Transverse colon (tissue), 4 donors: ENCODE measurements at regions of chr14 and their contacts with region 1.

Region 1: DNA sequence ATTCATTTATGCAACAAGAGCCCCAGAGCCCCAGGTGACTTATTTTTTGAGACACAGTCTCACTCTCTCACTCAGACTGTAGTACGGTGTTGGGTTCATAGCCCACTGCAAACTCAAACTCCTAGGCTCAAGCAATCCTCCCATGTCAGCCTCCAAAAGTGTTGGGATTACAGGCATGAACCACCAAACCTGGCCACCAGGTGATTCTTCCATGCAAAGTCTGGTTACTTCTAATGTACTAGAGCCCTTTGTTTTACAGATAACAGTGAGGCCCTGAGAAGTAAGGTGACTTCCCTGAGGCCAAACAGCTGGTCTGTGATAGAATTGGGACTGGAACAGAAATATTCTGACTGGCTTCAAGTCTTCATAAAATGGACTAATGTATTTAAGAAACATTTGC is 10.0 kb upstream of the KCNK10 start:
- DNase-seq: no peak
- H3K4me3 ChIP-seq: no peak overlapping the region
- H3K27ac ChIP-seq: no peak overlapping the region
- H3K4me1 ChIP-seq: no peaks in the 10 kb centered on the region
- H3K27me3 ChIP-seq: peaks cover 35% of the 10 kb centered on the region
- CTCF ChIP-seq: no peak
- EP300 ChIP-seq: no peak
- POLR2A ChIP-seq: no peak

Region 2: DNA sequence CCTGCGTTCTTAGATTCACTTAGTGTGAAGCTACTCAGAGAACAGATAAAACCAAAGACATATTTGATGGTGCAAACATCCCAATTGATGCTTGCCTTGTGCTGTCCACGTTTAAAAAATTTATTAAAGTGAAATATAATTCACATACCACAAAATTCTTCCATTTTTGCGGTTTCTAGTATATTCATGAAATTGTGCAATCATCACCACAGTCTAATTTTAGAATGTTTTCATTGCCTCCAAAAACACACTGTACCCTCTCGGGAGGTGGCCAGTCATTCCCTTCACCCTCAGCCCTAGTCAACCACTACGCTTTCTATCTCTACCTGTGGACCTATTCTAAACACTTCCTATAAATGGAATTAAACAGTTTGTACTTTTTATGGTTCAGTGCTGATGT is 1693.9 kb before region 1 on chr14:
- in situ Hi-C with region 1: no loop called
- intact Hi-C with region 1: no loop called
- DNase-seq: no peak
- H3K4me3 ChIP-seq: no peak overlapping the region
- H3K27ac ChIP-seq: no peak overlapping the region
- H3K4me1 ChIP-seq: no peaks in the 10 kb centered on the region
- H3K27me3 ChIP-seq: no peaks in the 10 kb centered on the region
- CTCF ChIP-seq: no peak
- EP300 ChIP-seq: no peak
- POLR2A ChIP-seq: no peak

Region 3: GRCh38 chr14:88369496-88369895 is 36.5 kb after region 1 on chr14:
- in situ Hi-C with region 1: no loop called
- intact Hi-C with region 1: loop called (anchors 1 kb)
- DNase-seq: no peak
- H3K4me3 ChIP-seq: no peak overlapping the region
- H3K27ac ChIP-seq: no peak overlapping the region
- H3K4me1 ChIP-seq: no peaks in the 10 kb centered on the region
- H3K27me3 ChIP-seq: no peaks in the 10 kb centered on the region
- CTCF ChIP-seq: no peak
- EP300 ChIP-seq: no peak
- POLR2A ChIP-seq: no peak